GM12878 (cell line): ENCODE measurements at regions of chr19 and their contacts with region 1.

Region 1: GRCh38 chr19:55132453-55133129 is 15.2 kb upstream of the PPP1R12C start:
- DNase-seq: no peak
- ATAC-seq: no peak
- H3K4me3 ChIP-seq: no peak overlapping the region
- H3K27ac ChIP-seq: no peak overlapping the region
- H3K4me1 ChIP-seq: peaks cover 13% of the 10 kb centered on the region
- H3K27me3 ChIP-seq: no peaks in the 10 kb centered on the region
- CTCF ChIP-seq: peak; percentile 10 to 28 (median 27); a peak in 3 of 6 replicates
- EP300 ChIP-seq: no peak
- POLR2A ChIP-seq: no peak
- RAD21 ChIP-seq: peak; percentile 57

Region 2: GRCh38 chr19:55015126-55015525 is 117.5 kb before region 1 on chr19:
- CTCF ChIA-PET with region 1: no interaction called
- POLR2A ChIA-PET with region 1: no interaction called
- RAD21 ChIA-PET with region 1: no interaction called
- SMC1A ChIA-PET with region 1: no interaction called
- in situ Hi-C with region 1: no loop called
- intact Hi-C with region 1: no loop called
- DNase-seq: no peak
- ATAC-seq: no peak
- H3K4me3 ChIP-seq: no peak overlapping the region
- H3K27ac ChIP-seq: no peak overlapping the region
- H3K4me1 ChIP-seq: no peaks in the 10 kb centered on the region
- H3K27me3 ChIP-seq: no peaks in the 10 kb centered on the region
- CTCF ChIP-seq: no peak
- EP300 ChIP-seq: no peak
- POLR2A ChIP-seq: no peak
- RAD21 ChIP-seq: no peak

Region 3: GRCh38 chr19:55088543-55089341 is 43.8 kb before region 1 on chr19:
- CTCF ChIA-PET with region 1: interaction called, 17 read pairs
- POLR2A ChIA-PET with region 1: no interaction called
- RAD21 ChIA-PET with region 1: no interaction called
- SMC1A ChIA-PET with region 1: no interaction called
- in situ Hi-C with region 1: no loop called
- intact Hi-C with region 1: no loop called
- DNase-seq: no peak
- ATAC-seq: peak; percentile 81
- H3K4me3 ChIP-seq: no peak overlapping the region
- H3K27ac ChIP-seq: no peak overlapping the region
- H3K4me1 ChIP-seq: 0 out of 2 replicates have a peak, but pooled peaks cover 3% of the 10 kb centered on the region
- H3K27me3 ChIP-seq: peaks cover 0 to 7% of the 10 kb centered on the region in 2 experiments; a peak in 2 of 4 replicates
- CTCF ChIP-seq: peak; percentile 48 to 76 (median 54)
- EP300 ChIP-seq: no peak
- POLR2A ChIP-seq: no peak
- RAD21 ChIP-seq: peak; percentile 50

Region 4: DNA sequence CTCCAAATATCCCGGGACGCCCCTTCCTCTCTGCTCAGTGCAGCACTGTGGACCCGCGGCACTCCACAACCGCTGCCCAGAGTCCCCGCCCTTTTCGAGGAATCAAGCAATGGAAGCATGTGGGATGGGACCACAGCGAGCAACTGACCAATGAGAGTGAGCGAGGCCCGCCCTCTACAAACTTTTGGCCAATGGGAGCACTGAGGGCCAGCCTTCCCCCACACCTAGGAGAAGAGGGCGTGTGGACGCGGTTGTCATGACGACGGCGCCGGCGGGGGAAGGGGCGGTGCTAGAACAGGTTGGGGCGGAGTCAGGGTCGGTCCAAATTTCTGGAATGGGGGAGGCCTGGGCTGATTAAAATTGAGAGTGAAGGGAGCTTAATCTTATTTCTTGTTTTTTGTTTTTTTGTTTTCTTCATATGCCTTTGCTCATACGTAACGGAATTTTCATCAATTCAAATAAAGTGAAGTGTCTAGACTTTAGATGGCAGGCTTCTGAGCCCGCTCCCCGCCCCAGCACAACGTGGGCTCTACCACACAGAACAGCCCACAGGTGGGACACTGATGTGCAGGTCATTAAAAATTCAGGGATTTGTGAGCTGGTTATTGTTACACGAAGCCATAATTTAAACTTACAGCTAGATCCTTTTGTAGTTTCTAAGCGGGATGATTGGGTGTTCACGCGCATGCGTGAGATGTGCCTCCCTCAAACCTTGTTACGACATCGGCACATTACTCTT is 34.1 kb after region 1 on chr19 and contains the start of gene DNAAF3:
- CTCF ChIA-PET with region 1: no interaction called
- POLR2A ChIA-PET with region 1: interaction called, 11 read pairs
- RAD21 ChIA-PET with region 1: no interaction called
- SMC1A ChIA-PET with region 1: no interaction called
- in situ Hi-C with region 1: no loop called
- intact Hi-C with region 1: no loop called
- DNase-seq: peak; percentile 49
- ATAC-seq: peak; percentile 99
- H3K4me3 ChIP-seq: 0 out of 2 replicates have a peak within 1 kb of the TSS, but pooled peaks have one; percentile 34
- H3K27ac ChIP-seq: no peak within 1 kb of the TSS
- H3K4me1 ChIP-seq: no peaks in the 10 kb centered on the region
- H3K27me3 ChIP-seq: peaks cover 0 to 3% of the 10 kb centered on the region in 2 experiments; a peak in 1 of 4 replicates
- CTCF ChIP-seq: no peak
- EP300 ChIP-seq: no peak
- POLR2A ChIP-seq: no peak
- RAD21 ChIP-seq: no peak
- polyA plus RNA-seq, gene DNAAF3: not detected

Region 5: GRCh38 chr19:55611983-55612645 is 479.5 kb after region 1 on chr19:
- CTCF ChIA-PET with region 1: no interaction called
- POLR2A ChIA-PET with region 1: no interaction called
- RAD21 ChIA-PET with region 1: no interaction called
- SMC1A ChIA-PET with region 1: no interaction called
- in situ Hi-C with region 1: no loop called
- intact Hi-C with region 1: no loop called
- DNase-seq: no peak
- ATAC-seq: peak; percentile 65
- H3K4me3 ChIP-seq: no peak overlapping the region
- H3K27ac ChIP-seq: no peak overlapping the region
- H3K4me1 ChIP-seq: peaks cover 4% of the 10 kb centered on the region
- H3K27me3 ChIP-seq: no peaks in the 10 kb centered on the region
- CTCF ChIP-seq: no peak
- EP300 ChIP-seq: no peak
- POLR2A ChIP-seq: no peak
- RAD21 ChIP-seq: no peak